ENCODE measurements at regions of chr12 and their contacts with region 1.

Region 1: GRCh38 chr12:67648521-67649260 is at the start of gene DYRK2:
- DNase-seq: peak; percentile 87
- H3K4me3 ChIP-seq: peak within 1 kb of the TSS; percentile 96
- H3K27ac ChIP-seq: peak within 1 kb of the TSS; percentile 90
- H3K4me1 ChIP-seq: peaks cover 19% of the 10 kb centered on the region
- H3K27me3 ChIP-seq: no peaks in the 10 kb centered on the region
- CTCF ChIP-seq: no peak
- total RNA-seq, gene DYRK2: 28.6 and 35.2 TPM in 2 replicates

Region 2: DNA sequence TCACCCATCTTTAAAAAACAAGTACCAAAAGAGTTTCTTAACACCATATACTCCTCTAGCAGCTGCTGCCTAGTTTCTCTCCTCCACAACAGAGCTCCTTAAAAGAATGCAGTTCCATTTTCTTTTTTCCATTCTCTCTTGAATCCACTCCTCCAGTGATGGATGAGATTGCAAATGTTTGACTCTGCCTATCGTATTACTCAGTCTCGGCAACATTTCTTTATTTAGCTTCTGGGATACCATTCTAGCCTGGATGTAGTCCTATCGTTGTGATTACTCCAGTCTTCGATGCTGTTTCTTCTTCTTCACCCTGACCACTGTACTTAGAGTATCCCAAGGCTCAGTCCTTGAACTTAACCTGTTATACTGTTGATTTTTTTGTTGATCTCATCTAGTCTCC is 348.8 kb before region 1 on chr12:
- CTCF ChIA-PET with region 1: no interaction called
- POLR2A ChIA-PET with region 1: no interaction called
- intact Hi-C with region 1: no loop called
- DNase-seq: no peak
- H3K4me3 ChIP-seq: no peak overlapping the region
- H3K27ac ChIP-seq: no peak overlapping the region
- H3K4me1 ChIP-seq: no peaks in the 10 kb centered on the region
- H3K27me3 ChIP-seq: no peaks in the 10 kb centered on the region
- CTCF ChIP-seq: no peak

Region 3: DNA sequence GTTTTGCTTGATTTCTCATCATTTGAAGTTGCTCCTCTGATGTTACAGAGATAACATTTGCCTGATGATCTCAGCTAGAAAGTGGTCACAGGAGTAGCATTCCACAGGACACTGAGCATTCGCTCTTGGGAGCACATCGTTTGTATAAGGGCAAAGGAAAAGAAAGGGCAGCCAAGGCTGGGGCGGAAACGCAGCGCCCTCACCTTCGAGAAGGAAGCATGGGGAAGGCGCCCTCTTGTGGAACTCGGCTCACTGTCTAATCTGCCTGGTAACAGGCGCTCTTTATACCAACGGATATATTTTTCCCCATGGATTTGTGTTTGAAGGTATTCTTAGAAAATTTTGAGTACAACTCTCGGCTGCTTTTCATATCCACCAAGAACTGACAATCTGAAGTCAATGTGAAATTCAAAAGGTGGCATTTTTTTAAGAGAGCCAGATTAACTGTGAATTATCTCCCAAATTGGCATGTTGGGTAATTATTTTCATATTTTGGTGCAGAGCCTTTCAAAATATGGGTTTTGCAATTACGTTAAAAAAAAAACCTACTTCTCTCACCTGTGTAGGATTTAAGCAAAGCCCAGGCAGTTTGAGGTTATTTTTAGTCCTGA is 206.8 kb before region 1 on chr12:
- CTCF ChIA-PET with region 1: no interaction called
- POLR2A ChIA-PET with region 1: no interaction called
- intact Hi-C with region 1: loop called (anchors 10 kb)
- DNase-seq: peak; percentile 82
- H3K4me3 ChIP-seq: no peak overlapping the region
- H3K27ac ChIP-seq: no peak overlapping the region
- H3K4me1 ChIP-seq: no peaks in the 10 kb centered on the region
- H3K27me3 ChIP-seq: no peaks in the 10 kb centered on the region
- CTCF ChIP-seq: peak; percentile 91

Region 4: DNA sequence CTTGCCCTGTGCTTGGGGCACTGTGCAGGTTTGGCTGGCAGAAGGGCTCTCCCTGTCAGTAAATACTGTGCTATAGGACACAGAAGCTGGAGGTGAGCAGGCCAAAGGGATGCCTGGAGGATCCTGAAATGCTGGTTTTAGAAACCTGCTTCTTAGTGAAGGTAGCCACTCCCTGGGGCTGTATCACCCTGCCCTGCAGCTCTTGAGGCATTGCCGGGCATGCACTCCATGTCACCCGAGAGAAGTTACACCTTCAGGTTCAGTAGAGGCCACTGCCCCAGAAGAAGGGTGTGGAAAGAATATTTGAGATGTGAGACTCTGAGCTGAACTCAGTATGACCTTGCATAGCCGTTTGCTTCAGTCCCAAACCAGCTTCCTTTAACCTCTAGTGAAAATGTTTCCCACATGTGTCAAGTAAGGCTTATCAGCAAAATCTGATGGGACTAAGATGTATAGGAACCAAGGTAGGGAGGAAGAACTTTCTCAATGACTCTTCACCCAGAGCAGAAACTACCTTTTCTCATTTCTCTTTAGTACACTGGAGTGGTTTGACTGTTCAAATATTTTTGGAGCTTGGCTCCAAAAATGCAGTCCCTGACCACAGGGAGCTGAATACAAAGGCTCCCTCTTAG is 164.7 kb before region 1 on chr12:
- CTCF ChIA-PET with region 1: no interaction called
- POLR2A ChIA-PET with region 1: no interaction called
- intact Hi-C with region 1: no loop called
- DNase-seq: no peak
- H3K4me3 ChIP-seq: no peak overlapping the region
- H3K27ac ChIP-seq: no peak overlapping the region
- H3K4me1 ChIP-seq: no peaks in the 10 kb centered on the region
- H3K27me3 ChIP-seq: no peaks in the 10 kb centered on the region
- CTCF ChIP-seq: no peak

Region 5: DNA sequence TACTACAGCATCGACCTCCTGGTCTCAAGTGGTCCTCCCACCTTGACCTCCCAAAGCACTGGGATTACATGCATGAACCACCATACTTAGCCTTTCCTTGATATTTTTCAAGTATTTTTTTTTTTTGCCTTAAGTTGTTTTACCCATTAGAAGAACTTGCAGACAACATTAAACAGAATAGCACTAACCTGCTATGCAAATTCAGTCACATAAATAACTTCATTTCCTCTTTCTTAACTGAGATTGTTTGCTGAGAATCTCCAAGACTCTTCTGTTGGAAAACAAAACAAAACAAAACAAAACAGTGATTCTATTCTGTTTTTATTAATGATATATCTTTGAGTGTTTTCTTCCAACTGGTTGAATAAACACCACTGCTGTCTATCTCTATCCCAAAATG is 224.7 kb after region 1 on chr12:
- CTCF ChIA-PET with region 1: no interaction called
- POLR2A ChIA-PET with region 1: no interaction called
- intact Hi-C with region 1: no loop called
- DNase-seq: no peak
- H3K4me3 ChIP-seq: no peak overlapping the region
- H3K27ac ChIP-seq: no peak overlapping the region
- H3K4me1 ChIP-seq: no peaks in the 10 kb centered on the region
- H3K27me3 ChIP-seq: no peaks in the 10 kb centered on the region
- CTCF ChIP-seq: no peak

Region 6: DNA sequence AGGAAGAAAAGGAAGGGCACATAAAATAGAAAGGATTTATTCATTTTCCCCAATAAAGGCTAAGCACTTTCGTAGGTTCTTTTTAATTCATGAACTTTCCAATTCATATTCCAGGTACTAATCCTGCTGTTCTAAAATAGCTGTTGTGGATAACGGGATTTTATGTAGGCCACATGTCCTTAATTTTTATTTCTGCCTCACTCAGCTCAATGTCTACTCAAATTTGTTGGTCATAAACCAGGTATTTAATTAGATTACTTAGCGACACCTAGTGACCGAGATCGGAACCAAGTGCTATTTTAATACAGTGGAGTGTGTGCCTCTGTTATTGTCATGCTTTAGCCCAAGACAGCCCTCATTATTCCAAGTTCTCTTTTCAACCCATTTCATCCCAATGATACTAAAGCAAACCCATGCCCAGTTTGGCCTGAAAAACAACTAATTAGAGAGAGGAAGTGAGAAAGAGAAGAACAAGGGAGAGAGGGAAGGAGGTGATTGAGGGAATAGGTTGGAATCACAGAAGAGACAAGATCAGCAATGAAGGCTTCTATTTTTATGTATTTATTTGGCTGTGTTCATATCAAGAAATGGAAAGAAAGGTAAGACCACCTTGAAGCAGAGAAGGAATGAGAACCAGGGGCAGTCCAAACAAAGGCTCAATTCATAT is 294.7 kb after region 1 on chr12:
- CTCF ChIA-PET with region 1: interaction called, 4 read pairs
- POLR2A ChIA-PET with region 1: no interaction called
- intact Hi-C with region 1: loop called (anchors 10 kb)
- DNase-seq: peak; percentile 71
- H3K4me3 ChIP-seq: no peak overlapping the region
- H3K27ac ChIP-seq: no peak overlapping the region
- H3K4me1 ChIP-seq: no peaks in the 10 kb centered on the region
- H3K27me3 ChIP-seq: peaks cover 21% of the 10 kb centered on the region
- CTCF ChIP-seq: peak; percentile 76